Esophagus muscularis mucosa (tissue), 4 donors: ENCODE measurements at regions of chr1 and their contacts with region 1.

Region 1: DNA sequence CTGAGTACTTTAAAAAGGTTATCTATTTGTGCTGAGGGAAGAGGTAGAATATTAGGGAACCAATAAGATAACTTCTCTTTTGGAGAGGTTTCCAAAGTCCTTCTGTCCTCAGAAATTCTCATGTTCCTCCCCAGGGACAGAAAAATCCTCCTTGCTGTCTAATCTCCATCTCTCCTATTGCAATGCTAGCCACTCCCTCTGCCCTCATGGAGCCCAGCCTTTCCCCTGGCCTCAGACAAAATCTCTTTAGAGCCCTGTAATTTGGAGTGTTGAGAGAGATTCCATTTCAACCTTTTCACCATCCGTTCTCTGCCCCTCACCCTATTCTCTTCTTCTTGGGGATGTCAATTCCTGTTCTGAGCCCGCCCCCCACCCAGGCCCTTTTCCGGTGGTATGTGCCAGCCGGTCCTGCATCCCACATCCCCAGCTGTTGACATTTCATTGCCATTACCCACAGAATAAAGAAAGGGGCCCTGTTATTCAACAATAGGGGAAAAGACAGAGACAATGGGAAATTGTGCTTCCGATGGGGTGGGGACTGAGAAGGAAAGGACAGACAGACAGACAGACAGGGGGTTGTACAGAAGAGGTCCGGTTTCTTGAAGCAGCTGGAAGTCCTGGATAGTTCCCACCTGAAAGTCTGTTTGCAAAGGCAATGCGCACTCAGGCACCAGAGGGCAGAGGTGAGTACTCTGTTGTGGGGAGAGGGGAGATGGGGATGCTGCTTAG is at the start of gene HAPLN2:
- DNase-seq: no peak
- H3K4me3 ChIP-seq: no peak within 1 kb of the TSS
- H3K27ac ChIP-seq: peak within 1 kb of the TSS in 1 of 4 donors; percentile 9
- H3K4me1 ChIP-seq: peaks cover 21 to 42% (median 35%) of the 10 kb centered on the region in 4 donors
- H3K27me3 ChIP-seq: peaks cover 0 to 17% (median 2%) of the 10 kb centered on the region in 4 donors
- CTCF ChIP-seq: peak in 1 of 3 experiments; percentile 12
- EP300 ChIP-seq: no peak
- POLR2A ChIP-seq: no peak
- total RNA-seq, gene HAPLN2: 0.83 to 5.1 (median 2.2) TPM

Region 2: DNA sequence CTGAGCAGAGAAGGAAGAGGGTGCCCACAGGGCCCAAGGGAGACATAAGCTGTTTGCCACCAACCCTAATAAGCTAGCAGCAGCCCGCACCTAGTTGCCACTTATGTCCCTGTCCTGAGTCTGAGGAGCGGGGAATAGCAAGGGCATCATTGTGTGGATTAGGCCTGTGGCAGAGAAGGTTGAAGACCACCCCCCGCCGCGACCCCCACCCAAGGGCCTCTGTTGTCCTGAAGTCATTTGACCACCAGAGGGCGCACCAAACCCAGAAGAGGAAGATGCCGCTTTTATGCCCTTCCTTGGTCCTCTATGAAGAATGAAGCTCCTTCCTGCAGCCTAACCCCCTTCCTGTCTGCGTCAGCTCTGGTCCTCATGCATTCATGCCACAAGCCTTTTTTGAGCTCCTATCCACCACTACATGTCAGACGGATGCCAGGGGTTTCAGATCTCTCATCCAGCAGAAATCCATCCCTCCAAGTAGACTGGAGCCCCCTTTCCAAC is 233.4 kb before region 1 on chr1:
- intact Hi-C with region 1: loop called (anchors 5 kb)
- DNase-seq: no peak
- H3K4me3 ChIP-seq: no peak overlapping the region
- H3K27ac ChIP-seq: no peak overlapping the region
- H3K4me1 ChIP-seq: peaks cover 0 to 16% (median 11%) of the 10 kb centered on the region in 4 donors
- H3K27me3 ChIP-seq: peaks cover 0 to 56% (median 20%) of the 10 kb centered on the region in 4 donors
- CTCF ChIP-seq: peak; percentile 86 to 95 (median 89)
- EP300 ChIP-seq: no peak
- POLR2A ChIP-seq: no peak